OCI-LY7 (cell line): ENCODE measurements at regions of chr16 and their contacts with region 1.

Region 1: GRCh38 chr16:65309354-65309753 is 187.5 kb upstream of the CDH11 start:
- DNase-seq: no peak
- H3K4me3 ChIP-seq: no peak overlapping the region
- H3K27ac ChIP-seq: no peak overlapping the region
- H3K4me1 ChIP-seq: no peaks in the 10 kb centered on the region
- CTCF ChIP-seq: no peak

Region 2: GRCh38 chr16:65297453-65297852 is 11.9 kb before region 1 on chr16:
- CTCF ChIA-PET with region 1: interaction called, 3 read pairs
- POLR2A ChIA-PET with region 1: interaction called, 11 read pairs
- intact Hi-C with region 1: no loop called
- DNase-seq: no peak
- H3K4me3 ChIP-seq: no peak overlapping the region
- H3K27ac ChIP-seq: no peak overlapping the region
- H3K4me1 ChIP-seq: no peaks in the 10 kb centered on the region
- CTCF ChIP-seq: no peak

Region 3: GRCh38 chr16:65323655-65324237 is 14.4 kb after region 1 on chr16:
- CTCF ChIA-PET with region 1: no interaction called
- POLR2A ChIA-PET with region 1: no interaction called
- intact Hi-C with region 1: no loop called
- DNase-seq: peak; percentile 10
- H3K4me3 ChIP-seq: no peak overlapping the region
- H3K27ac ChIP-seq: no peak overlapping the region
- H3K4me1 ChIP-seq: no peaks in the 10 kb centered on the region
- CTCF ChIP-seq: no peak